Activated T-helper 1 cell treated with anti-CD3 and anti-CD28 coated beads, Interleukin-12 subunit alpha, Interleukin-12 subunit beta, Interleukin-2, Interleukin-4 antibody, amounts not matched to agents 30 ng/mL and 10 ng/mL and 1 ng/mL, durations not matched to agents 14 hours and 24 hours and 36 hours (primary cell): ENCODE measurements at regions of chr3 and their contacts with region 1.

Region 1: GRCh38 chr3:187714404-187714979 is 12.1 kb upstream of the RTP2 start:
- DNase-seq: peak; percentile 59
- H3K4me3 Mint-ChIP-seq: no peak overlapping the region
- H3K27ac Mint-ChIP-seq: no peak overlapping the region
- H3K4me1 Mint-ChIP-seq: peaks cover 6% of the 10 kb centered on the region
- H3K27me3 Mint-ChIP-seq: peaks cover 5% of the 10 kb centered on the region

Region 2: GRCh38 chr3:187223799-187224198 is 490.7 kb before region 1 on chr3:
- intact Hi-C with region 1: loop called (anchors 1 kb)
- DNase-seq: no peak
- H3K4me3 Mint-ChIP-seq: no peak overlapping the region
- H3K27ac Mint-ChIP-seq: no peak overlapping the region
- H3K4me1 Mint-ChIP-seq: no peaks in the 10 kb centered on the region
- H3K27me3 Mint-ChIP-seq: peaks cover 5% of the 10 kb centered on the region

Region 3: DNA sequence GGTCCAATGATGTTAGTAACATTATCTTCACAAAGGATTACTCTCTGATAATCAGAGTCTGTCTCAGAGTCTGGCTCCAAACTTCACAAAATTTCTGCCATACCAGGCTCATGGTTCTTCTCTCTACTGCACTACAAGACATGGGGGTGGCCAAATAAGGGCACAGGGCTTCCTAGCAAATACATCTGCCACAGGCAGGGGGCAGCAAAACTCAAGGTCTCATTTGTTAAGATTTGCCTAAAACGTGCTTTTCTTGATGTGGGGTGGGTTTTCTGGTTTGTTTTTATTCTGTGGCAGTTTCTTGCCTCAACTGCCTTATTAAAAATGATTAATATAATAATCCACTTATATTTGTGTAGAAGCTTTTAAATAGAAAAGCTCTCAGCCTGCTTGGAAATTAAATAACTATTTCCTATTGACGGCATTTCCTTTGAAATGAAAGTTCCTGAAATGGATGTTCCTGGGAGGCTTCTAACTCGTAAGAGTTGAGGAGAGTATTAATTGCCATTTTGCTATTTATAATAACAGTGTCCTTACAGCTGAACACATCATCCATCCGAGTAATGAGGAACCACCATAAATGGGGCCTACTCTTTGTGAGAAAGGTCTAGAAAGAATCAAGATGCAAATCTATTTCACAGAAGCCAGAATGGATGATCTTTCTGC is 98.1 kb before region 1 on chr3:
- intact Hi-C with region 1: loop called (anchors 1 kb)
- DNase-seq: peak; percentile 22
- H3K4me3 Mint-ChIP-seq: no peak overlapping the region
- H3K27ac Mint-ChIP-seq: no peak overlapping the region
- H3K4me1 Mint-ChIP-seq: no peaks in the 10 kb centered on the region
- H3K27me3 Mint-ChIP-seq: peaks cover 8% of the 10 kb centered on the region

Region 4: GRCh38 chr3:187679638-187680396 is 34.7 kb before region 1 on chr3:
- intact Hi-C with region 1: loop called (anchors 1 kb)
- DNase-seq: peak; percentile 40
- H3K4me3 Mint-ChIP-seq: no peak overlapping the region
- H3K27ac Mint-ChIP-seq: no peak overlapping the region
- H3K4me1 Mint-ChIP-seq: peaks cover 14% of the 10 kb centered on the region
- H3K27me3 Mint-ChIP-seq: peaks cover 27% of the 10 kb centered on the region

Region 5: DNA sequence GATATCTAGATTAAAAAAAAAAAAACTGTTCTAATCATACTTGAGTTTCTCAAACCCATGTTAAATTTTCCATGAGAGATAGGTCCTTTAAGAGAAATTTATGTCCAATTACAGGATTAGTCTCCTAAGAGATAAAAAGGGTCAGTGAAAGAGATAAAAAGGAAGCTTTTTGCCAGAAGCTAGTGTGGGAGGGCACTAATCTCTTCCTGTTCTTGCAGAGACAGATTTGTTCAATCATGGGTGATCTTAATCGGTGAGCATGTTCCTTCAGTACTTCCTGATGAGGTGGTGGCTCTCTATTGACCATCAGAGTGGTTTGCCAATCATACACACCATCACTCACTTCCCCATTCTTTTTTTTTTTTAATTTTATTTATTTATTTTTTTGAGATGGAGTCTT is 422.6 kb after region 1 on chr3:
- intact Hi-C with region 1: no loop called
- DNase-seq: no peak
- H3K4me3 Mint-ChIP-seq: no peak overlapping the region
- H3K27ac Mint-ChIP-seq: no peak overlapping the region
- H3K4me1 Mint-ChIP-seq: peaks cover 21% of the 10 kb centered on the region
- H3K27me3 Mint-ChIP-seq: peaks cover 3% of the 10 kb centered on the region

Region 6: GRCh38 chr3:188294823-188295487 is 580.5 kb after region 1 on chr3:
- intact Hi-C with region 1: no loop called
- DNase-seq: no peak
- H3K4me3 Mint-ChIP-seq: no peak overlapping the region
- H3K27ac Mint-ChIP-seq: peak overlapping the region; percentile 33
- H3K4me1 Mint-ChIP-seq: peaks cover 86% of the 10 kb centered on the region
- H3K27me3 Mint-ChIP-seq: no peaks in the 10 kb centered on the region